OCI-LY7 (cell line): ENCODE measurements at regions of chr4 and their contacts with region 1.

Region 1: DNA sequence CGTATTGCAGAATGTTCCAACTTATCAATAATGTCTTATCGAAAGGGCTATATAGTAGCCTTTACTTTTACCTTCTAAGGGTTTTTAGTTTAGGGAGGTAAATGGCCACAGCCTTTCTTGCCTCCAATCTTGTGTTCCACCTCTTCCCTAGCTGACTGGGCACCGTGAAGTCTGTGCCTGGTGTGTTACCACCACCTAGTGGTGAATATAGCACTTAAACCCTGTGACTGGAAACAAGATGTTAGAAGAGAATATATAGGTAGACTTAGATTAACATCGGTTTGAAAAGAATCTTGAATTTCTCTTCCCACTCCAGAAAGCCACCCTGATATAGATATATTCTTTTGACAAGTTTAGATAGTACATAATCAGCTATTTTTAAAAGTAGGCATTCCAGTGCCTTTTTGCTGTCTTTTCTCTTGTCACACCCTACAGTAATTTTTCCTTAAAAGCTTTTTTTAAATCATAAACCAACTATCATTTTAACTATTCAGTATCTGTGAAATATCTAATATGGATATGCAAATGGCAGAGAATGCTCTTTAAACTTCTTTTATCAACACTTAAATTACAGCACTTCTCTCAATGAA is 27.8 kb upstream of the ADH7 start:
- DNase-seq: peak; percentile 61
- H3K4me3 ChIP-seq: no peak overlapping the region
- H3K27ac ChIP-seq: no peak overlapping the region
- H3K4me1 ChIP-seq: no peaks in the 10 kb centered on the region
- CTCF ChIP-seq: peak; percentile 90

Region 2: DNA sequence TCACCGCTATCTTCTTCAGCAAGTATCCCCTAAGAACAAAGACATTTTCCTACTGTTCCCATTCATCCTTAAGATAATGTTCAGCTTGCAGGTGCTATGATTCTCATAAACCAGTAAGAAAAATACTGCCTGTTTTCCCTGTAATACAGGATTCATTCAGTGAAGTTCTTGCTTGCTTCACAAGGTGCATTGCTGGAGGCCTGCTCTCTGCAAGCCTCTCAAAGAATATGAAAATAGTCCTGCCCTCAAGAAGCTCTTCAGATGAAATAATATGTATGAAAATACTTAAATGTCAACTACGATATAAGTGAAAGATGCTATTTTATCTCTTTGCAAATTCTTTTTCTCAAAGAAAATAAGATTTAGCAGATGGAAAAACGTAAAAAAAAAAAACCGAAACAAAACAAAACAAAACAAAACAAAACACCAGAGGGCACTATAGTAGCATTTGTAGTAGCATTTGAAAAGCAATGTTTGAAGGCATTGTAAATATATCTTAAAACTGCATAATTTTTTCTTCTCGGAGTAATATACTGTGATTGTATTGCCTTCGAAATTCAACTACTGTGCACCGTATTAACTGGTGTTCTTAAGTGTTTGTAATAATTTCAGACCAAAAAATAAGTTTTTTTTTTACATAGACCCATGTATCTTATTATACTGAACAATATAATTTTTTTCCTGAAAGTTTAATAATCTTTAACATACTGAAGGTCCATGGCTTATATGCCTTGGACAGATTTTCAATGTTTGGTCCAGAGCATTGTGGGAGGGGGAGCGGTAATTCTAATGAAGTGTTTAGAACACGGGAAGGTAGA is 344.9 kb before region 1 on chr4:
- CTCF ChIA-PET with region 1: no interaction called
- POLR2A ChIA-PET with region 1: no interaction called
- intact Hi-C with region 1: loop called (anchors 1 kb)
- DNase-seq: peak; percentile 24
- H3K4me3 ChIP-seq: no peak overlapping the region
- H3K27ac ChIP-seq: no peak overlapping the region
- H3K4me1 ChIP-seq: no peaks in the 10 kb centered on the region
- CTCF ChIP-seq: peak; percentile 78

Region 3: GRCh38 chr4:99715286-99715685 is 252.3 kb after region 1 on chr4:
- CTCF ChIA-PET with region 1: no interaction called
- POLR2A ChIA-PET with region 1: no interaction called
- intact Hi-C with region 1: no loop called
- DNase-seq: no peak
- H3K4me3 ChIP-seq: no peak overlapping the region
- H3K27ac ChIP-seq: no peak overlapping the region
- H3K4me1 ChIP-seq: no peaks in the 10 kb centered on the region
- CTCF ChIP-seq: no peak